ENCODE measurements at regions of chr9 and their contacts with region 1.

Region 1: DNA sequence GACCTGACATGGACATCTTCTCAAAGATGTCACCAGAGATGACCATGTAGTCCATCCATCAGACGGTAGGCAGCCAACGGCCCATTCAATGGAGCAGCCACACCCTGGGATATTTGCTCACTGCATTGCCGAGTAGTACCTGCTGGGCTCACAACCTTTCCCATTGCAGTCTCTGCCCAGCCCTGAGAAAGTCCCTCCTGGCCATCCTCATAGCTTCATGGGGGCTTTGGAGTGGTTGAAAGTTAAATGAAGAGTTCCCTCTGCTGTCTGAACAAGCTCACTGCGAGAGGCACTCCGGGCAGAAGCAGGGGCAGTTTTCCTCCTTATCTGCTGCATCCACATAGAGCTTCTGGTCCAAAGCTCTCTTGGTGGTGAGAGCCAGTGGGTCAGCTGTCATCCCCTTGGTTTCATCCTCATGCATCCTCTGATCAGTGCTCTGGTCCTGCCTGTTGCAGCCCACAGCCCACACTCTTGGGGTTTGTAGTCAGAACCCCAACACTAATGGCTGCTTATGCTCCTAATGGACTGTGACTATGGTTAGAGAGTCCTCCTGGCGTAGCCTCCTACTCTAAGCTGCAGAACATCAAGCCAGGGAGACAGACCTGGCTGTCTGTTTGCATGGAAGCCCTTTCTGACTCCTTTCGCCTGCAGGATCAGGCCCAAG is 23.4 kb downstream of the TNFSF8 start:
- DNase-seq: peak in 1 of 2 donors; percentile 25
- ATAC-seq: peak; percentile 55

Region 2: GRCh38 chr9:114681594-114682332 is 225.3 kb before region 1 on chr9 and contains the start of gene TEX48:
- intact Hi-C with region 1: loop called in 1 of 2 experiments (anchors 10 kb)
- DNase-seq: peak; percentile 73 to 78
- ATAC-seq: peak; percentile 99
- total RNA-seq, gene TEX48: not detected

Region 3: GRCh38 chr9:114738581-114739316 is 168.3 kb before region 1 on chr9:
- intact Hi-C with region 1: loop called (anchors 5 kb)
- DNase-seq: peak; percentile 49 to 69
- ATAC-seq: peak; percentile 95

Region 4: GRCh38 chr9:115104908-115105307 is 197.9 kb after region 1 on chr9:
- intact Hi-C with region 1: no loop called
- DNase-seq: no peak
- ATAC-seq: no peak

Region 5: GRCh38 chr9:115524453-115525059 is 617.5 kb after region 1 on chr9:
- intact Hi-C with region 1: loop called in 1 of 2 experiments (anchors 10 kb)
- DNase-seq: peak in 1 of 2 donors; percentile 4
- ATAC-seq: peak; percentile 64

Region 6: DNA sequence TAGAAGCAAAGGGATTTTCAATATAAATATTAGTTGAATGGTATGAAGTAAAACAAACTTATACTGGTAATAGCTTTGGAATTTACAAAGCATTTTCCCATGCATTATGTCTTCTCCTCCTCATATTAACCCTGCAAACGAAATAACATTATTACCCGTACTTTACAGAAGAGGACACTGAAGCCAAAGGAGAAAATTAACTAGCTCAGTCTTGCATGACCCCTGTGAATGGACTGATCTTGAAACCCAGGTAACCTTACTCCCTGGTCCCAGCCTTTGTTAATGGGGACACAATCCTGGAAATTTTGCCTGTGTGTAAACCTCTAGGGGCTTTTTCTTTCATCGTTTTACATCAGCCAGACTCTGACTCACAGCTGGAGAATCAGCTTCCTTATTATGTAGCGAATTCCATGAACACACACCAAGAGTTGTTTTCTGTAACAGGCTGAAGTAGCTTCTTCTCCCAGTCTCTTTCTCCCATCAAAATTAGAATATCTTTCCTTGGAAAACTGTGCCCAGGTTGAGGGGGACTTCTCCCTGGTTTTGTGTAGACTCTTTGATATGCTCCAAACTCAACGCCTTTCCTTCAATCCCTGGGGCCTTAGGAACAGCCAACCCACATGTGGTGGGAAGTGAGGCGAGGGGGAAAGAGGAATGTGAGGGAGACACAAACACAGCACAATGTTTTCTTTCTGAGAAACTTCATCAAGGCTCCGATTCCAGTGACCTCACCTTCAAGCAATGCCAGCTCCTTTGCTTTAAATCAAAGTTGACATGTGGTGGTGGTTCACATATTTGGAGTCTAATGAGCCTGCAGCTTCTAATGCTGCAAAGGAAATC is 765.7 kb after region 1 on chr9:
- intact Hi-C with region 1: no loop called
- DNase-seq: no peak
- ATAC-seq: no peak